ENCODE measurements at regions of chr6 and their contacts with region 1.

Region 1: GRCh38 chr6:44439270-44440045 is 52.0 kb downstream of the CDC5L start:
- H3K4me3 ChIP-seq: no peak overlapping the region
- H3K27ac ChIP-seq: no peak overlapping the region
- H3K4me1 ChIP-seq: peaks cover 10% of the 10 kb centered on the region
- CTCF ChIP-seq: no peak

Region 2: GRCh38 chr6:44456070-44456965 is 16.9 kb after region 1 on chr6:
- CTCF ChIA-PET with region 1: interaction called, 302 read pairs
- POLR2A ChIA-PET with region 1: no interaction called
- H3K4me3 ChIP-seq: peak overlapping the region; percentile 24
- H3K27ac ChIP-seq: no peak overlapping the region; the same call in 1 of the 2 replicates
- H3K4me1 ChIP-seq: peaks cover 12% of the 10 kb centered on the region
- CTCF ChIP-seq: peak; percentile 77